Heart left ventricle (tissue), 16 donors: ENCODE measurements at regions of chr1 and their contacts with region 1.

Region 1: DNA sequence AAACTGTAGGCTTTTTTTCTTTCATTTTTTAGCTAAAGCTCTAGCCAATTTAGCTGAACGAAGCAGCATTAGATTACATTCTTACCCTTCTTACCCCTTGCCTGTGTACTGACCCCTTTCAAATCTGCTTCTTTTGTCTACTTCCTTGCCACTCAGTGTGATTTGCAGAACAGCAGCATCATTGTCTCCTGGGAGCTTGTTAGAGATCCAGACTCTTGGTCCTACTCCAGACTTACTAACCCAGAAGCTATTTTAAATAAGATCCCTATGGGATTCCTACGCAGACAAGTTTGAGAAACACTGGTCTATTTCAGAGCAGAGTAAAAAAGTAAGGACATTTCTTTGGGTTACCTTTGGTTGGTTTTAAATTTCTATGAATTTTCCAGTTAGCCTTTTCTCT is 13.8 kb downstream of the LRRC39 start:
- DNase-seq: no peak
- ATAC-seq: peak; percentile 20 to 78 (median 54)
- H3K4me3 ChIP-seq: no peak overlapping the region
- H3K27ac ChIP-seq: peak overlapping the region in 1 of 12 donors; percentile 14
- H3K4me1 ChIP-seq: peaks cover 0 to 15% (median 1%) of the 10 kb centered on the region in 12 donors
- H3K27me3 ChIP-seq: no peaks in the 10 kb centered on the region
- CTCF ChIP-seq: no peak
- POLR2A ChIP-seq: no peak

Region 2: DNA sequence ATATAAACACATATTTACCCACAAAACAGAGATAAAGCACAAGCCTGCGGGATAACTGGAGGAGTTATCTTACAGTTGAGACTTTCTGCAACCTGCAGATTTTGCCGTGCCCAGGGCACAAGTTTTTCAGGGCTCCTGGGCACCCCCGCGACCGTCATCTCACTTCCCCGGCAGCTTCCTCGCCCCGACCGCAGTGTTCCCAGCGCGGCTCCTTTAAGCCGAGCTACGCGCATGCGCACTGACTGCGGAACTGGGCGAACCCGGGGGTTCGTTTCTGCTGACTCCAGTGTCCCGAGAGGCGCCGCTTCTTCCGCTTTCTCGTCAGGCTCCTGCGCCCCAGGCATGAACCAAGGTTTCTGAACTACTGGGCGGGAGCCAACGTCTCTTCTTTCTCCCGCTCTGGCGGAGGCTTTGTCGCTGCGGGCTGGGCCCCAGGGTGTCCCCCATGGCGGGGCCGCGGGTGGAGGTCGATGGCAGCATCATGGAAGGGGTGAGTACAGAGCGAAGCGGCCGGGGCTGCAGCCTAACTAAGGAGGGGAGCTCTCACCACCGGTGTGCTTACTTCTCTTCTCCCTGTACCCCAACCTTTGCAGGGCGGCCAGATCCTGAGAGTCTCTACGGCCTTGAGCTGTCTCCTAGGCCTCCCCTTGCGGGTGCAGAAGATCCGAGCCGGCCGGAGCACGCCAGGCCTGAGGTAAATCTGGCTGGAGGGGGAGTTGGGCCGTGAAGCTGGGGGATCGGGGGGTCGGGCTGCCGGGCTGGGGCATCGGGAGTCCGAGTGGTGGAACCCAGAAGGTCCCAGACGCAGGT is 101.9 kb after region 1 on chr1 and contains the start of gene RTCA:
- intact Hi-C with region 1: loop called in 3 of 10 experiments (anchors 5 to 10 kb)
- DNase-seq: peak; percentile 96 to 99 (median 98)
- ATAC-seq: peak; percentile 98 to 100 (median 99)
- H3K4me3 ChIP-seq: peak within 1 kb of the TSS; percentile 62 to 99 (median 82)
- H3K27ac ChIP-seq: peak within 1 kb of the TSS; percentile 39 to 92 (median 82)
- H3K4me1 ChIP-seq: peaks cover 0 to 35% (median 23%) of the 10 kb centered on the region in 12 donors
- H3K27me3 ChIP-seq: no peaks in the 10 kb centered on the region
- CTCF ChIP-seq: peak in 1 of 12 donors; percentile 27
- POLR2A ChIP-seq: peak; percentile 14 to 93
- total RNA-seq, gene RTCA: 31.4 to 54.6 (median 36.3) TPM

Region 3: GRCh38 chr1:100277866-100278265 is 113.7 kb after region 1 on chr1:
- intact Hi-C with region 1: loop called in 2 of 10 experiments (anchors 10 kb)
- DNase-seq: no peak
- ATAC-seq: no peak
- H3K4me3 ChIP-seq: no peak overlapping the region
- H3K27ac ChIP-seq: no peak overlapping the region
- H3K4me1 ChIP-seq: peaks cover 0 to 14% (median 3%) of the 10 kb centered on the region in 12 donors
- H3K27me3 ChIP-seq: no peaks in the 10 kb centered on the region
- CTCF ChIP-seq: no peak
- POLR2A ChIP-seq: no peak

Region 4: DNA sequence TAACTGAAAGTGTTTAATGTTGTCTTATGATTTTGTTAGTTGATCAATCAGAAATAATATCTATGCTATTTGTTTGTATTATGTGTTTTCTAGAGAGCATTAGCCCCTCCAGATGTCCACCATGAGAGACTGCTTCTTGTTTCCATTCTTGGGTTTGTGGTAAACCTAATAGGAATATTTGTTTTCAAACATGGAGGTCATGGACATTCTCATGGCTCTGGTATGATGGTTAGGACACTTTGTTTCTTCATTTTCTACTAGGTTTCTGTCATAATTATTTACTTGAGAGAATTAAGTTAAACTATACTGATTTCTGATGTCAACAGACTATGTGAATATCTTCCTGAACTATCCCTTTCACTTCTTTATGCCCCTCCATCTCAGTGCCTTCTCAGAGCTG is 747.8 kb after region 1 on chr1:
- intact Hi-C with region 1: no loop called
- DNase-seq: no peak
- ATAC-seq: no peak
- H3K4me3 ChIP-seq: no peak overlapping the region
- H3K27ac ChIP-seq: no peak overlapping the region
- H3K4me1 ChIP-seq: no peaks in the 10 kb centered on the region
- H3K27me3 ChIP-seq: no peaks in the 10 kb centered on the region
- CTCF ChIP-seq: no peak
- POLR2A ChIP-seq: no peak

Region 5: GRCh38 chr1:100955322-100955721 is 791.1 kb after region 1 on chr1:
- intact Hi-C with region 1: no loop called
- DNase-seq: no peak
- ATAC-seq: peak in 1 of 4 donors; percentile 63
- H3K4me3 ChIP-seq: no peak overlapping the region
- H3K27ac ChIP-seq: peak overlapping the region in 1 of 12 donors; percentile 7
- H3K4me1 ChIP-seq: peaks cover 0 to 18% (median 0%) of the 10 kb centered on the region in 12 donors
- H3K27me3 ChIP-seq: no peaks in the 10 kb centered on the region
- CTCF ChIP-seq: no peak
- POLR2A ChIP-seq: no peak